ENCODE measurements at regions of chr14 and their contacts with region 1.

Region 1: GRCh38 chr14:52825085-52825484 is 33.7 kb upstream of the GNPNAT1 start:
- DNase-seq: no peak

Region 2: DNA sequence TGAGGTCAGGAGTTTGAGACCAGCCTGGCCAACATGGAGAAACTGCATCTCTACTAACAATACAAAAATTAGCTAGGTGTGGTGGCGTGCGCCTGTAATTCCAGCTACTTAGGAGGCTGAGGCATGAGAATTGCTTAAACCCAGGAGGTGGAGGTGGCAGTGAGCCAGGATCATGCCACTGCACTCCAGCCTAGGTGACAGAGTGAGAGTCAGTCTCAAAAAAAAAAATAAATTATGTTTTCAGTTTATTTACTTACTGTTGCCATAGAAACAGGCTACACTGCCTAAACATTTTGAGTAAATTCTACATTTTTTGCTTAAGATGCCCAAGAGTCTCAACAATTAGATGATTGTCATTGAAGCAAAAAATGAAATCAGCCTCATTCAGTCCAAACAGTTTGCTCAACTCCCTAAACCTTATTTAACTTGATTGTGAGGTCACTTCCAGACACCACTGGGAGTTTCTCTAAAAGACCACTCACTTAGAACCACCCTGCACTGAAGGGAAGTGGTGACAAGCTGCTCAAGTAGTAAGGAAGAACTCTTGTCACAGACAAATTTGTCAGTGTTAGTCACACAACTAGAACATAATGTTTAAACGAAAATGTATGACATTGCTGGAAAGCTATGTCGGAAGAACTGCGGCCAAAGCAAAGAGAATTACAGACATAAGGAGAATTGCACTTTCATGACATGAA is 23.9 kb before region 1 on chr14:
- intact Hi-C with region 1: no loop called
- DNase-seq: no peak

Region 3: DNA sequence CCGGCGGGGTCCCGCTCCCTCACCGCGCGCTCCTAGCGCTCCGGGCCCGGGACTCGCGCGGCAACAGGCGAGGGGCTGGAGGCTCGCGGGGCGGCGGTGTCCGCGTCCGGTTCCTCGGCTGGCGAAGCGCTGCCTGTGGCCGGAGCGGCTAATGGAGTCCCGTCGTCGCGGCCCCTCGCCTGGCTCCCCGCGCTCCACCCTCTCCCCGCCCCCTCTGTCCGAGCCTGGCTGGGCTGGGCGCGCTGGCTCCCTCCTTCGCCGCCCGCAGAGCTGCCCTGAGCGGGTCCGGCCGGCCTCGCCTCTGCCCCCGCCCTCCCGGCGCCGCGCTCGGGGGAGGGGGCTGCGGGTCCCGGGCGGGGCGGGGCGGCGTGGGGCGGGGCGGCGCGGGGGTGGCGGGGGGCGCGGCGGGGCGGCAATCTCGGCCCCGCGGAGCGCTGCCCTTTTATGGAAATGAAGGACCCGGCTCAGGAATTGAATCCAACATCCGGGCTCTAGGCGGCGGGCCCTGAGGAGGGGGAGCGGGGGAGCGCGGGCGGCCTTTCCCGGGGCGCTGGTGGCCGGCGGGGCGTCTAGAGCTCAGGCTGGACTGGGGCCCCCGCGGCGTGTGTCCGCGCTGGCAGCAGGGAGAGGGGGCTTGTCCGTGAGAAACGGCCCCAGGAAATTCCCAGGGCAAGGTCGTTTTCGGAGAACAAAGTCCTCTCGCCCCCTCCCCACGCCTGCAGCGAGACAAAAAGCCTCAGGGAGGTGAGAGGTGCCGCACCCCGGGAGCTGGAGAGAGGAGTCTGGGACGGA is 126.0 kb after region 1 on chr14 and contains the start of gene FERMT2:
- intact Hi-C with region 1: loop called in 1 of 2 experiments (anchors 5 kb)
- DNase-seq: peak; percentile 95
- total RNA-seq, gene FERMT2: 295 to 326 TPM

Region 4: DNA sequence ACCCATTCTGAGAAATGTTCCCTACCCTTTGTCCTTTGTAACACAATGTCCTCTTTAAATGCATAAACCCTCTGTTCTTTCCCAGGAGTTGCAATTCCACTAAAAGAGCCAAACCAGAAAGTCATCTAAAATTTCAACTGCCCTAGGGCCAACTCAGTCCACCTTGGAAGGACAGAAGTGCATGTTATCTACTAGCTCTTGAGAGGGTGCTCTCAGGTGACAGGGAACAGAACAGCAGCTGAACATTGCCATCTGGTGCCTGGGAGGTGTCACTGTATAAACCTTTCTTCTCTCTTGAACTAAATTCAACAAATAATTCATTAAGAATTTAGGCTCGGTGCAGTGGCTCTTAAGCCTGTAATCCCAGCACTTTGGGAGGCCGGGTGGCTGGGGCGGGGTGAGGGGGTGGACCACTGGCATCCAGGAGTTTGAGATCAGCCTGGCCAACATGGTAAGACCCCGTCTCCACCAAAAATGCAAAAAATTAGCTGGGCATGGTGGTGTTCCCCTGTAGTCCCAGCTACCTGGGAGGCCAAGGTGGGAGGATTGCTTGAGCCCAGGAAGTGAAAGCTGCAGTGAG is 136.1 kb after region 1 on chr14:
- intact Hi-C with region 1: loop called (anchors 5 kb)
- DNase-seq: no peak

Region 5: GRCh38 chr14:53542732-53543131 is 717.6 kb after region 1 on chr14:
- intact Hi-C with region 1: no loop called
- DNase-seq: no peak

Measured in posterior vena cava (tissue), 2 donors.